HepG2 (cell line): ENCODE measurements at regions of chr4 and their contacts with region 1.

Region 1: GRCh38 chr4:138749303-138749702 is 266.3 kb upstream of the NOCT start:
- DNase-seq: no peak
- ATAC-seq: no peak
- H3K4me3 ChIP-seq: no peak overlapping the region
- H3K27ac ChIP-seq: no peak overlapping the region
- H3K4me1 ChIP-seq: no peaks in the 10 kb centered on the region
- H3K27me3 ChIP-seq: no peaks in the 10 kb centered on the region
- CTCF ChIP-seq: no peak
- EP300 ChIP-seq: no peak
- POLR2A ChIP-seq: no peak
- RAD21 ChIP-seq: no peak

Region 2: GRCh38 chr4:139361301-139361700 is 612.0 kb after region 1 on chr4:
- CTCF ChIA-PET with region 1: no interaction called
- POLR2A ChIA-PET with region 1: no interaction called
- in situ Hi-C with region 1: no loop called
- intact Hi-C with region 1: loop called (anchors 10 kb)
- DNase-seq: no peak
- ATAC-seq: no peak
- H3K4me3 ChIP-seq: no peak overlapping the region
- H3K27ac ChIP-seq: no peak overlapping the region
- H3K4me1 ChIP-seq: no peaks in the 10 kb centered on the region
- H3K27me3 ChIP-seq: no peaks in the 10 kb centered on the region
- CTCF ChIP-seq: no peak
- EP300 ChIP-seq: no peak
- POLR2A ChIP-seq: no peak
- RAD21 ChIP-seq: no peak